ENCODE measurements at regions of chr14 and their contacts with region 1.

Region 1: DNA sequence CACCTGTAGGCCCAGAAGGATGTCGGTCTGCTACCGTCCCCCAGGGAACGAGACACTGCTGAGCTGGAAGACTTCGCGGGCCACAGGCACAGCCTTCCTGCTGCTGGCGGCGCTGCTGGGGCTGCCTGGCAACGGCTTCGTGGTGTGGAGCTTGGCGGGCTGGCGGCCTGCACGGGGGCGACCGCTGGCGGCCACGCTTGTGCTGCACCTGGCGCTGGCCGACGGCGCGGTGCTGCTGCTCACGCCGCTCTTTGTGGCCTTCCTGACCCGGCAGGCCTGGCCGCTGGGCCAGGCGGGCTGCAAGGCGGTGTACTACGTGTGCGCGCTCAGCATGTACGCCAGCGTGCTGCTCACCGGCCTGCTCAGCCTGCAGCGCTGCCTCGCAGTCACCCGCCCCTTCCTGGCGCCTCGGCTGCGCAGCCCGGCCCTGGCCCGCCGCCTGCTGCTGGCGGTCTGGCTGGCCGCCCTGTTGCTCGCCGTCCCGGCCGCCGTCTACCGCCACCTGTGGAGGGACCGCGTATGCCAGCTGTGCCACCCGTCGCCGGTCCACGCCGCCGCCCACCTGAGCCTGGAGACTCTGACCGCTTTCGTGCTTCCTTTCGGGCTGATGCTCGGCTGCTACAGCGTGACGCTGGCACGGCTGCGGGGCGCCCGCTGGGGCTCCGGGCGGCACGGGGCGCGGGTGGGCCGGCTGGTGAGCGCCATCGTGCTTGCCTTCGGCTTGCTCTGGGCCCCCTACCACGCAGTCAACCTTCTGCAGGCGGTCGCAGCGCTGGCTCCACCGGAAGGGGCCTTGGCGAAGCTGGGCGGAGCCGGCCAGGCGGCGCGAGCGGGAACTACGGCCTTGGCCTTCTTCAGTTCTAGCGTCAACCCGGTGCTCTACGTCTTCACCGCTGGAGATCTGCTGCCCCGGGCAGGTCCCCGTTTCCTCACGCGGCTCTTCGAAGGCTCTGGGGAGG is at the start of gene LTB4R:
- DNase-seq: no peak
- H3K4me3 ChIP-seq: peak within 1 kb of the TSS; percentile 20; the same call in 1 of the 2 replicates
- H3K27ac ChIP-seq: no peak within 1 kb of the TSS
- H3K27me3 ChIP-seq: peaks cover 2% of the 10 kb centered on the region
- CTCF ChIP-seq: peak; percentile 12; the same call in 1 of the 2 replicates
- polyA plus RNA-seq, gene LTB4R: 0.98 and 1.2 TPM in 2 replicates

Region 2: GRCh38 chr14:24241829-24242443 is 69.0 kb before region 1 on chr14:
- CTCF ChIA-PET with region 1: interaction called, 28 read pairs
- POLR2A ChIA-PET with region 1: interaction called, 4 read pairs
- DNase-seq: peak; percentile 72
- H3K4me3 ChIP-seq: peak overlapping the region; percentile 92
- H3K27ac ChIP-seq: peak overlapping the region; percentile 99
- H3K27me3 ChIP-seq: no peaks in the 10 kb centered on the region
- CTCF ChIP-seq: peak; percentile 55

Region 3: GRCh38 chr14:24289649-24290249 is 21.2 kb before region 1 on chr14:
- CTCF ChIA-PET with region 1: interaction called, 87 read pairs
- POLR2A ChIA-PET with region 1: no interaction called
- DNase-seq: no peak
- H3K4me3 ChIP-seq: no peak overlapping the region
- H3K27ac ChIP-seq: no peak overlapping the region
- H3K27me3 ChIP-seq: no peaks in the 10 kb centered on the region
- CTCF ChIP-seq: no peak

Region 4: GRCh38 chr14:24713404-24713803 is 402.5 kb after region 1 on chr14:
- CTCF ChIA-PET with region 1: no interaction called
- POLR2A ChIA-PET with region 1: no interaction called
- DNase-seq: no peak
- H3K4me3 ChIP-seq: no peak overlapping the region
- H3K27ac ChIP-seq: no peak overlapping the region
- H3K27me3 ChIP-seq: no peaks in the 10 kb centered on the region
- CTCF ChIP-seq: no peak

Region 5: DNA sequence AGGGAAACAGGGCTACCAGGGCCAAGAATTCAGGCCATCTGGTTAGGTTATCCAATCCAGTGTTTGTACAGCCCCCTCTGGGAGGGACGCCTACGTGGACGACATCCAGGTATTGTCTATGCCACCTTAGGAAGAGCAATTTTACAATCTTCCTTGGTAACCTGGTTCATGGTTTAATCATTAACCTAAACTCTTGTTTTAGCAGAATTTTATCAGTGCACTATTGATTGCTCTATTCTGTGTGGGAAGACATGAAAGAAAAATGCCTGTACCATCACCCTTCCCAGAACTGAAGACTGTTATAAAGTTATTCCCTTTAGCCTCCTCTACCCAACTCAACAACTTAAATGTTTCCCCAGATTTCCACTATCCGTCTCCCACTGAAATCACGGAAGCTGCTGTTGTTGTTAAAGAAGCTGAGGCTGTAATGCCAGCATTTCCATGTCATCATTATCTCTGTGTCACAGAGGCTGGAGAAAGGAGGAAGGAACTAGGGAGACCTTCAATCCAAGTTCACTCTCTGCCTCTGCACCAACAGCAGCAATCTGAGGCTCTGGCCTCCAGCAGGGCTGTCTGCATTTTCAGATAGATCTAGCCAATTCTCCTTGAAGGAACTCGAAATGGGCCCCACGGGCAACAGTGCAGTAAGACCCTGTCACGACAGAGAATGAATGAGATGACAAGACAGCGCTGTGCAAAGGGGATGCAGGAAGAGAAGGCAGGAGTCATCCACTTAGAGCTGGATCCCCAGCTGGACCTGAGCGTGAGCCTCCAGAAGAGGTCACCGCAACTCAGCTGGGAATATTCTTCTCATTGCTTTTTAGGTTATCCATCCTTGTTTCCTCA is 506.5 kb after region 1 on chr14:
- CTCF ChIA-PET with region 1: no interaction called
- POLR2A ChIA-PET with region 1: no interaction called
- DNase-seq: no peak
- H3K4me3 ChIP-seq: no peak overlapping the region
- H3K27ac ChIP-seq: no peak overlapping the region
- H3K27me3 ChIP-seq: no peaks in the 10 kb centered on the region
- CTCF ChIP-seq: peak; percentile 43

Measured in AG04450 (cell line).